Activated CD8-positive, alpha-beta T cell treated with anti-CD3 and anti-CD28 coated beads for 36 hours (primary cell): ENCODE measurements at regions of chr7 and their contacts with region 1.

Region 1: DNA sequence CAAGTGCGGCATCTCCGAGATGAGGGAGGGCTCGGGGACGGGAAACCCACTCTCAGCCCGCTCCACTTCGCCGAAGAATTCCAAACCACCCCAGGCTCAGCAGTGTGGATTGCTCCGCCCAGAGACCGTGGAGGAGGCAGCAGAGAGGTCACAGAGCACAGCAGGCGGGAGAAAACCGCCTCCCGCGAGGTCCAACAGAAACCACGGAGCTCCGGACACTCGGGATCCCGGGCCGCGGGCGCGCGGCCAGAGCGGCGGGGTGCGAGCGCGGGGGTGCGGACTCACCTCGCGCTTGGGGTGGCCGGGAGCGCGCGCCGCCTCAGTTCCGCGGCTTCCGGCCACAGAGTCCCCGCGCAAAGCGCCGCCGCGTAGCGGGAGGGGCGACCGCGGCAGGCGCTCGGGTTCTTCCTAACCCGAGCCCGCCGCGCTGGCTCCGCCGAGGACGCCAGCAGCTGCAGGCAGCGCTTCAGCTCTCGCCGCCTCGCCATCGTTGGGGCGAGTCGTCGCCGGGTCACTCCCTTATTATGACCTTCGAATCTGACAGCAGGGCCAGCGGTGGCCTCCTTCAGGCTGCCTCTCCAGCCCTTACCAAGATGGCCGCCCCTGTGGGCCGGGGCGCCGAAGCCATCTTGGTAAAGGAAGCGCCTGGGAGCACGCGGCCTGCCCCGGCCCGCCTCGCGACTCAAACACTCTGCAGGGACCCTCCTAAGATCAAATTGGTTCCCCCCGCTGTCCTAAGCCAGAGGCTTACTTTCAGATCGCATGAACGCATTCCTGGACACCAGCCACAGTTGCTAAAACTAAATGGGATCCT is at the start of gene NAPEPLD:
- DNase-seq: peak; percentile 75
- ATAC-seq: peak; percentile 88
- H3K4me3 Mint-ChIP-seq: peak within 1 kb of the TSS; percentile 98
- H3K27ac Mint-ChIP-seq: peak within 1 kb of the TSS; percentile 99
- H3K4me1 Mint-ChIP-seq: peaks cover 34% of the 10 kb centered on the region
- H3K27me3 Mint-ChIP-seq: no peaks in the 10 kb centered on the region
- CTCF ChIP-seq: no peak
- total RNA-seq, gene NAPEPLD: 5.1 to 6.3 TPM

Region 2: GRCh38 chr7:103048833-103049232 is 100.4 kb before region 1 on chr7:
- CTCF ChIA-PET with region 1: no interaction called
- POLR2A ChIA-PET with region 1: no interaction called
- intact Hi-C with region 1: no loop called
- DNase-seq: no peak
- ATAC-seq: no peak
- H3K4me3 Mint-ChIP-seq: no peak overlapping the region
- H3K27ac Mint-ChIP-seq: no peak overlapping the region
- H3K4me1 Mint-ChIP-seq: no peaks in the 10 kb centered on the region
- H3K27me3 Mint-ChIP-seq: no peaks in the 10 kb centered on the region
- CTCF ChIP-seq: no peak

Region 3: DNA sequence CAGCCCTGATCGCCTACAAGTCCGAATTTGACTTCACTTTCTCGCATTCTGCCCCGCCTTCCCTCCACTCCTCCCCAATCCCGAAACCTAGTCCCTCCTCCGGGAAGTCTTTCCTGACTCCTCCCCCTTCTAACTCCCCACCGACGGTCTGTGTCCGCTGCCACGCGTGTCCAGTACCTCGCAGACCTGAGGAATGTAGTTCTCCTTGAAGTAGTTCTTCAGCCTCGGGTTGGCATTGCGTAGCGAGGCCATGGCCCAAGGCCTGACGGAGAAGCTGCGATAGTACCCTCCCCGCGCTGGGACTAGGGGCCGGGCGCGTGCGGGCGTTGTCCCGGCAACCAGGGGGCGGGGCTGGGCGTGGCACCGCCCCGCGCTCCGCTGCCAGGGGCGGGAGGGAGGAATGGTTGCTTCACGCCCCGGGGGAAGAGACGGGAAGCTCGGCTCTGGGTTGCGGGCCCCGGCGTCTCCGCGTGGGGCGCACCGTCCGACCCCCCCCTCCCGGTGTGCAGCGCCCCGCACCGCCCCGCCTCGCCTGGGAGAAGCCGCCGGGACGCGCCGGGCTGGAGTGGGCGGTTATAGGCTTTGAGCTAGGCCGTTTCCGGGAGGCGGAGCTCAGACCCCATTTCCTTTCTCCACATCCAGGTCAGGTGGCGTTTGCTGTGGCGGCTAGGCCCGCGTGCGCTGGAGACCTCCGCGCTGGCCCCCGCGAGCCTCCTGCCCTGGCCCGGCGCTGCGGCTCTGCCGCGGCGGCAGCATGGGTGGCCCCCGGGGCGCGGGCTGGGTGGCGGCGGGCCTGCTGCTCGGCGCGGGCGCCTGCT is 74.5 kb before region 1 on chr7 and contains the starts of genes ARMC10 and FBXL13:
- CTCF ChIA-PET with region 1: interaction called, 7 read pairs
- POLR2A ChIA-PET with region 1: interaction called, 15 read pairs
- intact Hi-C with region 1: loop called (anchors 5 kb)
- DNase-seq: peak; percentile 93
- ATAC-seq: peak; percentile 81
- H3K4me3 Mint-ChIP-seq: peak within 1 kb of the TSS; percentile 94
- H3K27ac Mint-ChIP-seq: peak within 1 kb of the TSS; percentile 97
- H3K4me1 Mint-ChIP-seq: peaks cover 45% of the 10 kb centered on the region
- H3K27me3 Mint-ChIP-seq: no peaks in the 10 kb centered on the region
- CTCF ChIP-seq: no peak
- total RNA-seq, gene ARMC10: 37.6 to 44.0 TPM
- total RNA-seq, gene FBXL13: 0.96 to 1.4 TPM

Region 4: GRCh38 chr7:103130903-103131624 is 18.1 kb before region 1 on chr7:
- CTCF ChIA-PET with region 1: no interaction called
- POLR2A ChIA-PET with region 1: no interaction called
- intact Hi-C with region 1: no loop called
- DNase-seq: no peak
- ATAC-seq: no peak
- H3K4me3 Mint-ChIP-seq: no peak overlapping the region
- H3K27ac Mint-ChIP-seq: no peak overlapping the region
- H3K4me1 Mint-ChIP-seq: peaks cover 2% of the 10 kb centered on the region
- H3K27me3 Mint-ChIP-seq: no peaks in the 10 kb centered on the region
- CTCF ChIP-seq: no peak